Panc1 (cell line): ENCODE measurements at regions of chr7 and their contacts with region 1.

Region 1: GRCh38 chr7:26910221-26910620 is 45.8 kb upstream of the SKAP2 start:
- DNase-seq: peak; percentile 38
- ATAC-seq: peak; percentile 69
- H3K4me3 ChIP-seq: no peak overlapping the region
- H3K27ac ChIP-seq: no peak overlapping the region
- H3K4me1 ChIP-seq: no peaks in the 10 kb centered on the region
- H3K27me3 ChIP-seq: no peaks in the 10 kb centered on the region
- CTCF ChIP-seq: no peak

Region 2: DNA sequence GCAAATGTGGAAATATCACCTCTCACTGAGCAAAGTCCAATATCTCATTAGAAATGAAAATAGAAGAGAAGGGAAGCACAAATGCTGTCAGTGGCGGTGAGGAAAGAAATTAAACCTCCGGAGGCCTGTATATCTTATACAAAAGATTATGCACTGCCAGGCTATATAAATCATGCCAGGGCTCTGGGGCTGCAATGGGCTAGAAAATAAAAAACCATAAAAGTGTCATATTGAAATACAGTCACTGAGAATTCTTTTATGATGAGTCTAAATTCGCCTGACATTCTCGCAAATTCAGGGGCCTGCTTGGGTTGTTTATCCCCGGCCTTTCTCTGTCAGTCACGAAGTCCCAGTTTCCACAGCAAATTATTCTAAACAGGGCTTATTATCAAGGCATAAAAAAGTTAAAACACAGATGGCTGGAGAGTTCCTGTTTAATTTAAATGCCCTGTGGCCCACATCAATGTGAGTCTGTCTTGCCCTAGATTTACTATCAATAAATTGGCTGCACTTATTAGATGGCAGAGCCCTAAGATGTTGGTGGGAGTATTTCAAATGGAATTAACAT is 424.8 kb before region 1 on chr7:
- CTCF ChIA-PET with region 1: no interaction called
- POLR2A ChIA-PET with region 1: no interaction called
- in situ Hi-C with region 1: no loop called
- intact Hi-C with region 1: no loop called
- DNase-seq: no peak
- ATAC-seq: no peak
- H3K4me3 ChIP-seq: no peak overlapping the region
- H3K27ac ChIP-seq: no peak overlapping the region
- H3K4me1 ChIP-seq: no peaks in the 10 kb centered on the region
- H3K27me3 ChIP-seq: no peaks in the 10 kb centered on the region
- CTCF ChIP-seq: no peak

Region 3: DNA sequence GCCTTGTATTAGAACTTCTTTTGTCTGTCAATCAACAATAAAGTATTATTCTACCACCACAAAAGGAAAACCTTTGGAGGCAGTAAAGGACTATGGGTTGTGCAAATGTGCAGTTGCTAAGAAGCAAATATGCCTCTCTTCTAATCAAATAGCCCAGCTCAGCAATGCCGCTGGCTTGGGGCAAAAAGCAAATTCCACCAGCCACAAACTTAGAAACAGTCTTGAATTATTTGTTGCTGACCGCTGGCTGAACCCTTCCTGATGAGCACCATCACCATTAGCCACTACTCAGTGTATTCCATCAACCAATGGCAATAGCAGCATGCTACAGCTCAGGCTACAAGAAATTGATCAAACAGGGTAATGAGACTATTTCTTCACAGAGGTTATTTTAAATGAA is 96.8 kb before region 1 on chr7:
- CTCF ChIA-PET with region 1: no interaction called
- POLR2A ChIA-PET with region 1: no interaction called
- in situ Hi-C with region 1: no loop called
- intact Hi-C with region 1: no loop called
- DNase-seq: no peak
- ATAC-seq: no peak
- H3K4me3 ChIP-seq: no peak overlapping the region
- H3K27ac ChIP-seq: no peak overlapping the region
- H3K4me1 ChIP-seq: no peaks in the 10 kb centered on the region
- H3K27me3 ChIP-seq: no peaks in the 10 kb centered on the region
- CTCF ChIP-seq: no peak

Region 4: GRCh38 chr7:27132214-27132613 is 222.0 kb after region 1 on chr7:
- CTCF ChIA-PET with region 1: no interaction called
- POLR2A ChIA-PET with region 1: interaction called, 10 read pairs
- in situ Hi-C with region 1: no loop called
- intact Hi-C with region 1: no loop called
- DNase-seq: no peak
- ATAC-seq: no peak
- H3K4me3 ChIP-seq: no peak overlapping the region
- H3K27ac ChIP-seq: peak overlapping the region; percentile 98
- H3K4me1 ChIP-seq: peaks cover 75% of the 10 kb centered on the region
- H3K27me3 ChIP-seq: no peaks in the 10 kb centered on the region
- CTCF ChIP-seq: no peak